Activated T-helper 1 cell treated with anti-CD3 and anti-CD28 coated beads, Interleukin-12 subunit alpha, Interleukin-12 subunit beta, Interleukin-2, Interleukin-4 antibody, amounts not matched to agents 30 ng/mL and 10 ng/mL and 1 ng/mL, durations not matched to agents 14 hours and 24 hours and 36 hours (primary cell): ENCODE measurements at regions of chr5 and their contacts with region 1.

Region 1: DNA sequence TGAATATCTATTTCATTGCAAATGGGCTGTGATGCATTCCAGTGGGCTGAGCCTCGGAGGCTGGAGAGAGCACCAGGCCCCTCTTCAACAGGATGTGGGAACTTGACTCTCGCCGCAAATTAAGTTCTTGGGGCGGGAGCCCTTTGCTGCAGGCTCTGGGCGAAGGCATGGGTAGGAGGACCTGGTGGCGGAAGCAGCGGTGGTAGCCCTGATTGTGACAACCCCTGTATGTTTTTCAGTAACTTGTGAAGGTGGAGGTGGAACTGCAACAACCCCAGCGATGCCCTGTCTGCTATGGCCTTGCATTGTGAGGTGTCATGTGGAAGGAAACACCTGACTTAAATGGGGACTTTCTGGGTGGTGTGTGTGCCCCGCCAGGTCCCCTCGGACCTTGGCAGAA is 9.4 kb downstream of the FYB1 start:
- DNase-seq: peak; percentile 78
- H3K4me3 Mint-ChIP-seq: peak overlapping the region; percentile 67
- H3K27ac Mint-ChIP-seq: peak overlapping the region; percentile 92
- H3K4me1 Mint-ChIP-seq: peaks cover 94% of the 10 kb centered on the region
- H3K27me3 Mint-ChIP-seq: no peaks in the 10 kb centered on the region

Region 2: DNA sequence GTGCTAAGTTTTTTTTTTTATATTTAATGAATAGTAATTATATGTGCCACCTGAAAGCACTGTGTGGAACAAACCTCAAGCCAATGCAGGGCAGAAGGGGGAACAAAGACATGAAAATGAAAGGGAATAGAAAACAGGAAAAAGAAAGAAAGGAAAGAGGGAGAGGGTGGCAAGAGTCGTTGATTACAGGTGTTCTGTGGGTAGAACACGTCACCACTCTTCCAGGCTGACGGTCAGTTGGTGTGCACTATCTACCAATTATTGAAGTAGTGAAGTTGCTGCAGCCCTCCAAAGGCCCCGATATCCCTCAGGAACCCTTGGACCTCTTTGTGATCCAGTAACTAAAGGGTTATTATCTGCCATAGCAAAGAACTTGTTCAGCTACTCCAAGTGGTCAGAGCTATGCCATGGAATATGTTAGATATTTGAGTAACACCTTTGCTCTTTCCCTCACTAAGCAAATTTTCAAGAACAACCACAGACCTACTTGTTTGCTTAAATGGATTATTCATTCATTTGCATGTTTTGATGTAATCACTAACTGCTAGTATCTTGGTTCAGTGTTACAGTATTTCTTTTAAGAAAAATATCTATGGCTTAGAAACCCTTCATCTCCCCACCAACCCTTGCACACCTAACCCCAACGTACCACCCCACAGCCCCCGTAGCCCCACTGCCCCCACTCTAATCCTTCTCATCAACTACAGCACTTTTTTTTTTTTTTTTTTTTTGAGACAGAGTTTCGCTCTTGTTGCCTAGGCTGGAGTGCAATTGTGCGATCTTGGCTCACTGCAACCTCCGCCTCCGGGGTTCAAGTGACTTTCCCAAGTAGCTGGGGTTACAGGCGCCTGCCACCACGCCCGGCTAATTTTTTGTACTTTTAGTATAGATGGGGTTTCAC is 21.8 kb before region 1 on chr5:
- intact Hi-C with region 1: loop called (anchors 1 kb)
- DNase-seq: no peak
- H3K4me3 Mint-ChIP-seq: peak overlapping the region; percentile 70
- H3K27ac Mint-ChIP-seq: peak overlapping the region; percentile 97
- H3K4me1 Mint-ChIP-seq: peaks cover 95% of the 10 kb centered on the region
- H3K27me3 Mint-ChIP-seq: no peaks in the 10 kb centered on the region

Region 3: GRCh38 chr5:39194466-39195136 is 15.3 kb before region 1 on chr5:
- intact Hi-C with region 1: loop called (anchors 2 kb)
- DNase-seq: no peak
- H3K4me3 Mint-ChIP-seq: peak overlapping the region; percentile 83
- H3K27ac Mint-ChIP-seq: peak overlapping the region; percentile 90
- H3K4me1 Mint-ChIP-seq: peaks cover 87% of the 10 kb centered on the region
- H3K27me3 Mint-ChIP-seq: no peaks in the 10 kb centered on the region

Region 4: DNA sequence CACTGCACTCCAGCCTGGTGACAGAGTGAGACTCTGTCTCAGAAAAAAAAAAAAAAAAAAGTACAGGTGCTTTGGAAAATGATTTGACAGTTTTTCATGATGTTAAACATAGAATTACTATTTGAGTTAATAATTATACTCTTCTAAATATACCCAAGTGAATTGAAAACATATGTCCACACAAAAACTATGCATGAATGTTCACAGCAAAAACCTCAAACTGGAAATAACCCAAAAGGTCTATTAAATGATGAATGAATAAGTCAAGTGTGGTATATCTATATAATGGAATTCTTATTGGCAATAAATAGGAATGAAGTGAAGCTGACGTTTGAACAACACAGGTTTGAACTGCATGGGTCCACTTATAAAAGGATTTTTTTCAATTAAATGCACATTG is 422.0 kb after region 1 on chr5:
- intact Hi-C with region 1: no loop called
- DNase-seq: no peak
- H3K4me3 Mint-ChIP-seq: no peak overlapping the region
- H3K27ac Mint-ChIP-seq: no peak overlapping the region
- H3K4me1 Mint-ChIP-seq: no peaks in the 10 kb centered on the region
- H3K27me3 Mint-ChIP-seq: peaks cover 13% of the 10 kb centered on the region